ENCODE measurements at regions of chr11 and their contacts with region 1.

Region 1: GRCh38 chr11:19903620-19904069 is 191.0 kb downstream of the NAV2 start:
- DNase-seq: peak; percentile 80
- H3K4me3 Mint-ChIP-seq: no peak overlapping the region
- H3K27ac Mint-ChIP-seq: no peak overlapping the region
- H3K4me1 Mint-ChIP-seq: no peaks in the 10 kb centered on the region
- H3K27me3 Mint-ChIP-seq: no peaks in the 10 kb centered on the region
- CTCF ChIP-seq: peak; percentile 85

Region 2: GRCh38 chr11:19311308-19312030 is 592.2 kb before region 1 on chr11:
- CTCF ChIA-PET with region 1: interaction called, 3 read pairs
- POLR2A ChIA-PET with region 1: no interaction called
- intact Hi-C with region 1: loop called (anchors 10 kb)
- DNase-seq: peak; percentile 71
- H3K4me3 Mint-ChIP-seq: no peak overlapping the region
- H3K27ac Mint-ChIP-seq: no peak overlapping the region
- H3K4me1 Mint-ChIP-seq: peaks cover 5% of the 10 kb centered on the region
- H3K27me3 Mint-ChIP-seq: no peaks in the 10 kb centered on the region
- CTCF ChIP-seq: peak; percentile 59

Region 3: GRCh38 chr11:19561011-19561410 is 342.6 kb before region 1 on chr11:
- CTCF ChIA-PET with region 1: interaction called, 322 read pairs
- POLR2A ChIA-PET with region 1: no interaction called
- intact Hi-C with region 1: loop called (anchors 1 kb)
- DNase-seq: peak; percentile 38
- H3K4me3 Mint-ChIP-seq: no peak overlapping the region
- H3K27ac Mint-ChIP-seq: no peak overlapping the region
- H3K4me1 Mint-ChIP-seq: peaks cover 6% of the 10 kb centered on the region
- H3K27me3 Mint-ChIP-seq: peaks cover 5% of the 10 kb centered on the region
- CTCF ChIP-seq: no peak

Region 4: DNA sequence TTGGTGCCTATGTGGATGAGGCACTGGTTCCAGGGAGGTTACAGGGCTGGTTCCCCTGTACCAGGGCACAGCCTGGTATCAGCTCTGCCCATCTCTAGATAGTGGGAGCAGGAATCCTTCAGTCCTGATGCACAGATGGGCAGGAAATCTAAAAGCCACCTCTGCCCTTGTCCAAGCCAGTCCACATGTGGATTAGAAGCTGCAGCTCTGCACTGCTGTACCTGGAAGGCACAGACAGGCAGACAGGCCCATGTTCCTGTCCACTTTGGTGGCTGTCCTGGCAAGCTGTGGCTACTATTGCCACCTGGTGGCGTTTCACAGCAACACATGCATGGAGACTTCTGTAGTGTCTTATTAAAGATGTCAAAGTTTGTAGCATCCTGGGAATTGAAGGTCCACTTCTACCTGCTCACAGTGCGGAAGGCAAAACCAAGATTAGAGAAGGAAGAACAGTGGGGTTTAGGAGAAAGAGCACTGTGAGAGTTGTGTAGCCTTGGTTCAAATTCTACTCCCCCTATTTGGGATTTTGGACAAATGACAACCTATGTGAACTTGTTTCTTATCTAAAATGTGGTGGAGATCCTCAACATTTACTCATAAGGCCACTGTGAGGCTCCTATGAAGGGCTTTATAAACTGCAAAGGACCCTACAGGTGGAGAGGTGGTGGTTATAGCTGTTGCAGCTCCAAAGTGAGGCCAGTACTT is 160.9 kb before region 1 on chr11:
- CTCF ChIA-PET with region 1: interaction called, 38 read pairs
- POLR2A ChIA-PET with region 1: no interaction called
- intact Hi-C with region 1: loop called (anchors 1 kb)
- DNase-seq: peak; percentile 78
- H3K4me3 Mint-ChIP-seq: no peak overlapping the region
- H3K27ac Mint-ChIP-seq: no peak overlapping the region
- H3K4me1 Mint-ChIP-seq: peaks cover 15% of the 10 kb centered on the region
- H3K27me3 Mint-ChIP-seq: no peaks in the 10 kb centered on the region
- CTCF ChIP-seq: peak; percentile 89

Region 5: GRCh38 chr11:19814421-19814820 is 89.2 kb before region 1 on chr11:
- CTCF ChIA-PET with region 1: interaction called, 8 read pairs
- POLR2A ChIA-PET with region 1: no interaction called
- intact Hi-C with region 1: loop called (anchors 1 kb)
- DNase-seq: no peak
- H3K4me3 Mint-ChIP-seq: no peak overlapping the region
- H3K27ac Mint-ChIP-seq: no peak overlapping the region
- H3K4me1 Mint-ChIP-seq: peaks cover 11% of the 10 kb centered on the region
- H3K27me3 Mint-ChIP-seq: no peaks in the 10 kb centered on the region
- CTCF ChIP-seq: no peak

Region 6: DNA sequence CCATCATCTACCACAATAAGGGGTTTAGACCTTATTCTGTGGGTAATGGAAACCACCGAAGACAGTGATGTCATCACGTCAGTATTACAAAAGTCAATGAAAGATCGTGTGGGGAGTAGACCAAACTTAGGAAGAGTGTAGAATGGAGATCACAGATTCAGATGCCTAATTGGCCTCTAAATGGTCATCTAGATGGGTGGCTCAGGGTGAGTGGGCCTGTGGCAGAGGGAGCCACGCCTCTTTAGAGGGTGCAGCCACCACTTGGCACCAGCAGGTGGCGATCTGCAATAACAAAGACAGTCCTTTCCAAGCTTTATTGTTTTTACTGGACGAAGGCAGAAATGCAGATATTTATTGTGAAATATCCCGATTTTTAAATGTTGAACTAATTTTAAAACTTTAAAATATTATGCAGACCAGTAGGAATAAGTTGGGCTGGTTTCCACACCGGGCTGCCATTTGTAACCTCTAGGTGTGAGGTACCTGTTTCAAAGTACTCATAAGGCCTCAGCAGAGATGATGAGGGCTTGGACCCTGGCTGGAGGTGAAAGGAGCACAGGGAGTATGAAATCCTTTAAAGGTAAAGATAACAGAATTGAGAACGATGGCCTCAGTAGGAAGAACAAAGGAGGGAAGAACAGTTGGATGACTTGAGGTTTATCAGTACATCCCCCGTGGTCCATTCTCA is 34.7 kb after region 1 on chr11:
- CTCF ChIA-PET with region 1: interaction called, 24 read pairs
- POLR2A ChIA-PET with region 1: no interaction called
- intact Hi-C with region 1: loop called (anchors 1 kb)
- DNase-seq: peak; percentile 72
- H3K4me3 Mint-ChIP-seq: no peak overlapping the region
- H3K27ac Mint-ChIP-seq: peak overlapping the region; percentile 47
- H3K4me1 Mint-ChIP-seq: peaks cover 24% of the 10 kb centered on the region
- H3K27me3 Mint-ChIP-seq: no peaks in the 10 kb centered on the region
- CTCF ChIP-seq: peak; percentile 80

Region 7: DNA sequence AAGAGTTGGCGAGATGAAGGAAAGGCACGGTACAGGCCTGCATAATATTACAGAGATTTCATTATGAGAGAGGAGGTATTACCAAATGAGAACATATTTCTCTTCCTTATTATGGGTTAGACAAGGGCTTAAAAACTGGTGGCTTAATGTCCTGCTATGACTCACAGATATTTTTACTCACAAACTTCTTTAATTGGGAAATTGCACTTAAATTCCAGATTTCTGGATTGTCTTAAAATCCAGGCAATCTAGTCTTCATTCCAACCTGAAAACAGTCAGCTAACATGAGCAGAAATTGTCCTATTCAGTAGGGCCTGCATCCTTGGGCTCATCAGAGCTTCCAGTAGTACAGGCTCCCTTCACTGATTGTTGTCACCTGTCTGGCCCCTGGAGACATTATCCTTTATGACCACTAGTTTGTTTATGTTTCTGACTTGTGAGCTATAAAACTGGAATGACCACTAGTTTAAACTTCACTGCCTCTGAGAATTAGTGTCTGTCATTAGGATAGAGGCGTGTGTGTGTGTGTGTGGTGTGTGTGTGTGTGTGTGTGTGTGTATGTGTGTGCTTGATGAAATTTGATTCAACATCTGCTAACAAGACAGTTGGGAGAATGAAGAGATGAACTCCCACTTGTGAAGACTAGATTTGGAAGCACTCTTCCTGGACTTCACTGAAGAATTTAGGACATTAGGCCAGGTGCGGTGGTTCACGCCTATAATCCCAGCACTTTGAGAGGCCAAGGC is 231.5 kb after region 1 on chr11:
- CTCF ChIA-PET with region 1: interaction called, 84 read pairs
- POLR2A ChIA-PET with region 1: no interaction called
- intact Hi-C with region 1: loop called (anchors 1 kb)
- DNase-seq: no peak
- H3K4me3 Mint-ChIP-seq: no peak overlapping the region
- H3K27ac Mint-ChIP-seq: no peak overlapping the region
- H3K4me1 Mint-ChIP-seq: peaks cover 17% of the 10 kb centered on the region
- H3K27me3 Mint-ChIP-seq: no peaks in the 10 kb centered on the region
- CTCF ChIP-seq: no peak

Measured in MCF 10A (cell line).